Activated CD4-positive, alpha-beta memory T cell treated with anti-CD3 and anti-CD28 coated beads for 36 hours (primary cell): ENCODE measurements at regions of chr10 and their contacts with region 1.

Region 1: GRCh38 chr10:24642622-24643417 is 80.9 kb downstream of the ARHGAP21 start:
- DNase-seq: no peak
- H3K4me3 Mint-ChIP-seq: no peak overlapping the region
- H3K27ac Mint-ChIP-seq: no peak overlapping the region
- H3K4me1 Mint-ChIP-seq: no peaks in the 10 kb centered on the region
- H3K27me3 Mint-ChIP-seq: no peaks in the 10 kb centered on the region

Region 2: GRCh38 chr10:24664991-24665390 is 22.2 kb after region 1 on chr10:
- CTCF ChIA-PET with region 1: no interaction called
- POLR2A ChIA-PET with region 1: no interaction called
- intact Hi-C with region 1: no loop called
- DNase-seq: no peak
- H3K4me3 Mint-ChIP-seq: no peak overlapping the region
- H3K27ac Mint-ChIP-seq: no peak overlapping the region
- H3K4me1 Mint-ChIP-seq: no peaks in the 10 kb centered on the region
- H3K27me3 Mint-ChIP-seq: no peaks in the 10 kb centered on the region

Region 3: DNA sequence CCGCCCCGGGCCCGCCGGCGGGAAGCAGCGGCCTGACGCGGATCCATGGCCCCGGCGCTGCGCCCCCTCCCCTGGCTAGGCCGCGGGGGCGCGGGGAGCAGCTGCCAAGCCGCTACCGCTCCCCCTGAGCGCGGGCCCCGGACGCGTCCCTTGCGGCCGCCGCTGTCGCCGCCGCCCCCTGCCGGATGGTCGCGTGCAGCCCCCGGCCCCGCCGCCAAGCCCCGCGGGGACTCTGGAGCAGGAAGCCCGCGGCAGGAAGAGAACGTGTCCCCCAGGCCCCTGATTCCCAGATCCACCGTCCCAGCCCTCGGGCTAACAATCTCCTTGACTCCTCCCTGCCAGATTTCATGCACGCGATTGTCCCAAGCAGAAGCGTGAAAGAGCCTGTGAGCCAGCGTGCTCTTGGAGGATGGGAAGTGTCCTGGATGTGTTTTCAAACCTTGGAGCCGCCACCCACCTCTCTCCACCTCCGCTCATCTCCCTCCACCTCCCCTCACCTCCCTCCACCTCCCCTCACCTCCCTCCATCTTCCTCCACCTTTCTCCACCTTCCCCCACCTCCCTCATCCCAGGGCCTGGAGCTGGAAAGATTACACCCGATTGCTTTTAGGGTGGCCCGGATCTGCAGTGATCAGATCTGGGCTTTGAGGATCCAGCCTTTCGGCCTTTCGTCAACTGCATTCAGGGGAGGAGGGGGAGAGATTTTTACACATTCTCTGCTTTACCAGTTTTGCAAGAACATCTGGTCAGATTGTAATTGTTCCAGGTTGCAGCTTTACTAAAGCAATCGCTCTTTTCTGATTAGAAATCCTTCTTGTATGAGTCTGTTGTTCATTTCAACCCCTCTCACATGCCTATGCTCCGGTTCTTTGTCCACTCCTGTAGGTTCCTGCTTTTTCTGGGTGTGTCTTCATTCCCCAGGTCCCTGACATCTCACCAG is 310.2 kb after region 1 on chr10:
- CTCF ChIA-PET with region 1: no interaction called
- POLR2A ChIA-PET with region 1: no interaction called
- intact Hi-C with region 1: loop called (anchors 5 kb)
- DNase-seq: peak; percentile 48
- H3K4me3 Mint-ChIP-seq: peak overlapping the region; percentile 66
- H3K27ac Mint-ChIP-seq: no peak overlapping the region
- H3K4me1 Mint-ChIP-seq: peaks cover 21% of the 10 kb centered on the region
- H3K27me3 Mint-ChIP-seq: peaks cover 4% of the 10 kb centered on the region

Region 4: GRCh38 chr10:25080880-25081581 is 438.2 kb after region 1 on chr10:
- CTCF ChIA-PET with region 1: interaction called, 24 read pairs
- POLR2A ChIA-PET with region 1: no interaction called
- intact Hi-C with region 1: loop called (anchors 1 kb)
- DNase-seq: peak; percentile 72
- H3K4me3 Mint-ChIP-seq: no peak overlapping the region
- H3K27ac Mint-ChIP-seq: no peak overlapping the region
- H3K4me1 Mint-ChIP-seq: peaks cover 9% of the 10 kb centered on the region
- H3K27me3 Mint-ChIP-seq: peaks cover 5% of the 10 kb centered on the region

Region 5: DNA sequence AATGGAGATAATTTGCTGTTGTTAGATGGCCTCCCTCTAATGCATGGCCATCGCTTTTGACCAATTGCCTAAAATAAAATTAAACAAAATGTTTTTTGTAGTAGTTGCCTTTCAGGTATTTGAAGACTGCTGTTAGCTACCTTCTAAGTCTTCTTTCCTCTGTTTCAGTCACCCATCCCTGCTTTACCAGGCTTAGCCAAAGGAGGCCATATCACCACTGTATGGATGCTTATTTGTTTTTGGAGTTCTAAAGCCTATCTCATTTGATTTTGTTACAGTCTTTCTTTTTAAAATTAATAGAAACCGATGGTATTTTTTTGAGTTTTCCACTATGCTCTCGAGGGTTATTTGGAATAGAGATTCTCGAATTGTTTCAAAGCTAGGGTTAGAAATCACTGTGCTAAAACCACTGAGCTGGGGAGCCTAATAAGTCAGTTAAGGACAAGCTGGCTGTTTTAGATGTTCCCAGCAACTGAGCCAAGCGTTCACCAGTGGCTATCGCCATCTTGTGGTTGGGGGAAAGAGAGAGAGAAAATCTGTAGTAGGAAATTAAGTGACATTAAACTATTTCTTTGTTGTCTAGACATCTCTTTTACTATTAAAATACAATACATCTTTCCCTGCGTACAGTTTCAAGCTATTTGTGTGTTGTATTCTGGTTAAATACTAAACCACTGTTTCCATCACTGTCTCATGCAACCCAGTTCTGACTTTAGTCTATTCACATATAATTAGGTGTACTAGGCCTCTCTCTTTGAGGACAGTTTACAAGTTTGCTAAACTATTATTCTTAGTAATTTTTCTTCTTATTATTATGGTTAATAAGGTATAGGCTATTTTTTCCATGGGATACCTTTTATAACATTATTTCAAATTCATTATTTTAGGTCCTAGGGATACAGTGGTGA is 584.2 kb after region 1 on chr10:
- CTCF ChIA-PET with region 1: no interaction called
- POLR2A ChIA-PET with region 1: no interaction called
- intact Hi-C with region 1: loop called (anchors 5 kb)
- DNase-seq: peak; percentile 31
- H3K4me3 Mint-ChIP-seq: no peak overlapping the region
- H3K27ac Mint-ChIP-seq: no peak overlapping the region
- H3K4me1 Mint-ChIP-seq: no peaks in the 10 kb centered on the region
- H3K27me3 Mint-ChIP-seq: no peaks in the 10 kb centered on the region